ENCODE measurements at regions of chr3 and their contacts with region 1.

Region 1: GRCh38 chr3:156605686-156606605 is 51.0 kb upstream of the SSR3 start:
- H3K4me3 Mint-ChIP-seq: peak overlapping the region; percentile 74
- H3K27ac Mint-ChIP-seq: peak overlapping the region; percentile 96
- H3K4me1 Mint-ChIP-seq: peaks cover 38% of the 10 kb centered on the region
- H3K27me3 Mint-ChIP-seq: no peaks in the 10 kb centered on the region

Region 2: GRCh38 chr3:156633335-156633734 is 27.4 kb after region 1 on chr3:
- intact Hi-C with region 1: no loop called
- H3K4me3 Mint-ChIP-seq: no peak overlapping the region
- H3K27ac Mint-ChIP-seq: no peak overlapping the region
- H3K4me1 Mint-ChIP-seq: no peaks in the 10 kb centered on the region
- H3K27me3 Mint-ChIP-seq: no peaks in the 10 kb centered on the region

Region 3: DNA sequence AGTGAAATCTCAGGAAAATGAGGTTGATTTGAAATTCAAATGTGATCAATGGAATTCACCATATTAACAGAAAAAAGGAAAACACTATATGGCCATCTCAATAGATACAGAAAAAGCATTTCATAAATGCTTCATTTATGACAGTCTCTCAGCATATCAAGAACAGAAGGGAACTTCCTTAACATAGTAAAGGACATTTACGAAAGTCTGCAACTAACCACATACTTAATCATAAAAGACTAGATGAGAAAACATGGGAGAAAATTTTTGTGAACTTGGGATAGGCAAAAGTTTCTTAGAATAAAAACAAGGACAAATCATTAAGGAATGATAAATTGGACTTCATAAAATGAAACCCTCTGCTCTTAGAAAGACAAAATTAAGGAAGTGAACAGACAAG is 43.7 kb after region 1 on chr3:
- intact Hi-C with region 1: loop called (anchors 5 kb)
- H3K4me3 Mint-ChIP-seq: peak overlapping the region; percentile 28
- H3K27ac Mint-ChIP-seq: peak overlapping the region; percentile 68
- H3K4me1 Mint-ChIP-seq: peaks cover 17% of the 10 kb centered on the region
- H3K27me3 Mint-ChIP-seq: no peaks in the 10 kb centered on the region

Region 4: GRCh38 chr3:156795890-156796481 is 190.0 kb after region 1 on chr3:
- intact Hi-C with region 1: no loop called
- H3K4me3 Mint-ChIP-seq: no peak overlapping the region
- H3K27ac Mint-ChIP-seq: no peak overlapping the region
- H3K4me1 Mint-ChIP-seq: peaks cover 31% of the 10 kb centered on the region
- H3K27me3 Mint-ChIP-seq: no peaks in the 10 kb centered on the region